ENCODE measurements at regions of chr6 and their contacts with region 1.

Region 1: GRCh38 chr6:25278914-25279747 is at the start of gene CARMIL1:
- DNase-seq: no peak
- ATAC-seq: peak; percentile 93
- H3K4me3 ChIP-seq: peak within 1 kb of the TSS; percentile 62 to 75
- H3K27ac ChIP-seq: peak within 1 kb of the TSS; percentile 45; the same call in 1 of the 2 replicates
- H3K4me1 ChIP-seq: peaks cover 9% of the 10 kb centered on the region; the same call in 1 of the 2 replicates
- H3K27me3 ChIP-seq: peaks cover 2% of the 10 kb centered on the region; the same call in 1 of the 2 replicates
- CTCF ChIP-seq: peak; percentile 88
- total RNA-seq, gene CARMIL1: 4.0 TPM

Region 2: GRCh38 chr6:25312703-25313501 is 33.8 kb after region 1 on chr6:
- CTCF ChIA-PET with region 1: no interaction called
- POLR2A ChIA-PET with region 1: no interaction called
- in situ Hi-C with region 1: no loop called
- intact Hi-C with region 1: no loop called
- DNase-seq: no peak
- ATAC-seq: no peak
- H3K4me3 ChIP-seq: no peak overlapping the region
- H3K27ac ChIP-seq: no peak overlapping the region
- H3K4me1 ChIP-seq: no peaks in the 10 kb centered on the region
- H3K27me3 ChIP-seq: no peaks in the 10 kb centered on the region
- CTCF ChIP-seq: no peak

Region 3: GRCh38 chr6:25889877-25890853 is 611.0 kb after region 1 on chr6:
- CTCF ChIA-PET with region 1: interaction called, 6 read pairs
- POLR2A ChIA-PET with region 1: no interaction called
- in situ Hi-C with region 1: no loop called
- intact Hi-C with region 1: loop called (anchors 10 kb)
- DNase-seq: peak; percentile 17
- ATAC-seq: peak; percentile 88
- H3K4me3 ChIP-seq: no peak overlapping the region
- H3K27ac ChIP-seq: no peak overlapping the region
- H3K4me1 ChIP-seq: no peaks in the 10 kb centered on the region
- H3K27me3 ChIP-seq: peaks cover 3% of the 10 kb centered on the region; the same call in 1 of the 2 replicates
- CTCF ChIP-seq: peak; percentile 60; the same call in 1 of the 2 replicates

Region 4: GRCh38 chr6:25992413-25993037 is 713.4 kb after region 1 on chr6:
- CTCF ChIA-PET with region 1: no interaction called
- POLR2A ChIA-PET with region 1: interaction called, 12 read pairs
- in situ Hi-C with region 1: no loop called
- intact Hi-C with region 1: no loop called
- DNase-seq: peak; percentile 73
- ATAC-seq: peak; percentile 96
- H3K4me3 ChIP-seq: peak overlapping the region; percentile 60 to 82
- H3K27ac ChIP-seq: peak overlapping the region; percentile 96
- H3K4me1 ChIP-seq: peaks cover 12% of the 10 kb centered on the region
- H3K27me3 ChIP-seq: no peaks in the 10 kb centered on the region
- CTCF ChIP-seq: peak; percentile 100